Esophagus muscularis mucosa (tissue), 4 donors: ENCODE measurements at regions of chr18 and their contacts with region 1.

Region 1: DNA sequence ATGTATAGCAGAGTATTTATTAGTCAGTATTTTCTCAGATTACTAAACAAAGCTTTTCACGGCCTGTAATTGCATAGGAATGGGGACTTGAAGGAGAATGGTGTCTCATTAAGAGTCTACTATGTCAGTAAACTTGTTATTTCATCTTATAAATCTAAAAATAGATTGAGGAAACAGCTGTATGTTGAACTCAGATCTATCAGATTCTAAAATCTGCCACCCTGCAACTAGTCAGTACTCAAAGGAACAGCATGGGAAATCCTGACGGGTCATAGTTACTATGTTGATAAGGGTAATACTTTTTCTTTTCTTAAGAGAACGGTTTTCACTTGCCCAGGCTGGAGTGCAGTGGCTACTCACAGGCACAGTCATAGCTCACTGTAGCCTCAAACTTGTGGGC is 70.2 kb upstream of the EMILIN2 start:
- DNase-seq: no peak
- H3K4me3 ChIP-seq: no peak overlapping the region
- H3K27ac ChIP-seq: no peak overlapping the region
- H3K4me1 ChIP-seq: no peaks in the 10 kb centered on the region
- H3K27me3 ChIP-seq: no peaks in the 10 kb centered on the region
- CTCF ChIP-seq: no peak
- EP300 ChIP-seq: no peak
- POLR2A ChIP-seq: no peak

Region 2: GRCh38 chr18:2706903-2707302 is 69.7 kb before region 1 on chr18:
- intact Hi-C with region 1: loop called (anchors 10 kb)
- DNase-seq: no peak
- H3K4me3 ChIP-seq: no peak overlapping the region
- H3K27ac ChIP-seq: no peak overlapping the region
- H3K4me1 ChIP-seq: no peaks in the 10 kb centered on the region
- H3K27me3 ChIP-seq: no peaks in the 10 kb centered on the region
- CTCF ChIP-seq: no peak
- EP300 ChIP-seq: no peak
- POLR2A ChIP-seq: no peak

Region 3: DNA sequence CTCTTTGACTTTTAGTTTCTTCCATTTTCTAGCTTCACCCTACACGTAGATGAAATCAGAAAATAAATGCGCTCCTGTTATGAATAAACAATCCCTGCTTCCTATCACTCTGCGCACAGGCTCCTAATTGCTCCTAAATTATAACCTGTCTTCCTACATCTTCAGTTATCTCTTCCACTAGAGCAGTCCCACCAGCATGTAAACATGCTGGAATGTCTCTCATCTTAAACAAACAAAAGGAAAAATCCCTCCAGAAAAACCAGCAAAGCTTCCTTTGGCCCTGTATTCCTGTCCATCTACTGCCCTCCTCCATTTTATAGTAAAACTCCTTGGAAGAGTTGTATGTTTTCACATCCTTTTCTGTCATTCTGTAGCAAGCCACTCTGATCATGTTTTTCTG is 35.0 kb before region 1 on chr18:
- intact Hi-C with region 1: no loop called
- DNase-seq: no peak
- H3K4me3 ChIP-seq: no peak overlapping the region
- H3K27ac ChIP-seq: no peak overlapping the region
- H3K4me1 ChIP-seq: peaks cover 0 to 3% (median 0%) of the 10 kb centered on the region in 4 donors
- H3K27me3 ChIP-seq: no peaks in the 10 kb centered on the region
- CTCF ChIP-seq: no peak
- EP300 ChIP-seq: no peak
- POLR2A ChIP-seq: no peak